Tibial artery (tissue), 4 donors: ENCODE measurements at regions of chr1 and their contacts with region 1.

Region 1: GRCh38 chr1:47483651-47484050 is 45.8 kb downstream of the FOXD2 start:
- DNase-seq: no peak
- H3K4me3 ChIP-seq: no peak overlapping the region
- H3K27ac ChIP-seq: no peak overlapping the region
- H3K4me1 ChIP-seq: peaks cover 0 to 2% (median under 1%) of the 10 kb centered on the region in 4 donors
- H3K27me3 ChIP-seq: no peaks in the 10 kb centered on the region
- CTCF ChIP-seq: no peak

Region 2: GRCh38 chr1:47471163-47471562 is 12.5 kb before region 1 on chr1:
- intact Hi-C with region 1: loop called (anchors 1 kb)
- DNase-seq: peak; percentile 71 to 72
- H3K4me3 ChIP-seq: no peak overlapping the region
- H3K27ac ChIP-seq: no peak overlapping the region
- H3K4me1 ChIP-seq: no peaks in the 10 kb centered on the region
- H3K27me3 ChIP-seq: peaks cover 0 to 3% of the 10 kb centered on the region in 2 donors
- CTCF ChIP-seq: no peak

Region 3: GRCh38 chr1:47840393-47841190 is 356.9 kb after region 1 on chr1:
- intact Hi-C with region 1: no loop called
- DNase-seq: peak in 1 of 2 donors; percentile 33
- H3K4me3 ChIP-seq: no peak overlapping the region
- H3K27ac ChIP-seq: peak overlapping the region; percentile 81 to 84
- H3K4me1 ChIP-seq: peaks cover 0 to 90% (median 64%) of the 10 kb centered on the region in 4 donors
- H3K27me3 ChIP-seq: no peaks in the 10 kb centered on the region
- CTCF ChIP-seq: no peak